ENCODE measurements at regions of chr7 and their contacts with region 1.

Region 1: DNA sequence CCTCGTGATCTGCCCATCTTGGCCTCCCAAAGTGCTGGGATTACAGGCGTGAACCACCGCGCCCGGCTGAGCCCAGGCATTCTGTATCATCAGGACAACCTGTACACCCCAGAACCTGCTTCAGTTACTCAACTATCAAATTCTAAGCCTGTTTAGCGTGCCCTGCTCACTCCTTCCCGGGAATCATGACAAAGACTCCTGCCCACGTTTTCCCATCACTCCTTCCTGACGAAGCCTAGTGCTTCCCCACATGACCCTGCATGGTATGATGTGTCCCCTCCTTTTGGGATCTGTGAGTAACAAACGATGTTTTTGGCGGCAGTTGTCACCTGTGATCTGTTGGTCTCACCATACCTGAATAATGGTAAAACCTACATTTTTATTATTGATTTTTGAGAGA is 12.2 kb upstream of the RADIL start:
- DNase-seq: no peak
- ATAC-seq: no peak

Region 2: DNA sequence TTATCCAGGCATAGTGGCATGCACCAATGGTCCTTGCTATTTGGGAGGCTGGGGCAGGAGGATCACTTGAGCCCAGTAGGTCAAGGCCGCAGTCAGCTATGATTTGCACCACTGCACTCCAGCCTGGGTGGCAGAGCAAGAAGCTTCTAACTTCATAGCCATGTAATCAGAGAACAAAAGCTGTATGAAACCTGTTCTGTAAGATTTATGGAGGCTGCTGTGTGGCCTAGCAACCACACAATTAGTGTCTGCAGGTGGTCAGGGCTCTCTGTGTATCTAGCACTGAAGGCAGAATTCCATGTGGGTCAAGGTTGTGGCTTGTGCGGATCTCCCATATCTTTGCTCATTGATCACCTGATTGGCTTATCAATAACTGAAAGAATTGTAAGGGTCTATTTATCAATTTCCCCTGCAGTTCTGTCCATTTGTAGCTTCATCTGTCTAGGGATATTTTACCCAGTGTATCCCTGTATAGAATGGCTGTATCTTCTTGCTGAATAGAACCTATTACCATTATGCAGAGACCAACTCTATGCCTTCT is 435.1 kb before region 1 on chr7:
- intact Hi-C with region 1: no loop called
- DNase-seq: no peak
- ATAC-seq: no peak

Region 3: DNA sequence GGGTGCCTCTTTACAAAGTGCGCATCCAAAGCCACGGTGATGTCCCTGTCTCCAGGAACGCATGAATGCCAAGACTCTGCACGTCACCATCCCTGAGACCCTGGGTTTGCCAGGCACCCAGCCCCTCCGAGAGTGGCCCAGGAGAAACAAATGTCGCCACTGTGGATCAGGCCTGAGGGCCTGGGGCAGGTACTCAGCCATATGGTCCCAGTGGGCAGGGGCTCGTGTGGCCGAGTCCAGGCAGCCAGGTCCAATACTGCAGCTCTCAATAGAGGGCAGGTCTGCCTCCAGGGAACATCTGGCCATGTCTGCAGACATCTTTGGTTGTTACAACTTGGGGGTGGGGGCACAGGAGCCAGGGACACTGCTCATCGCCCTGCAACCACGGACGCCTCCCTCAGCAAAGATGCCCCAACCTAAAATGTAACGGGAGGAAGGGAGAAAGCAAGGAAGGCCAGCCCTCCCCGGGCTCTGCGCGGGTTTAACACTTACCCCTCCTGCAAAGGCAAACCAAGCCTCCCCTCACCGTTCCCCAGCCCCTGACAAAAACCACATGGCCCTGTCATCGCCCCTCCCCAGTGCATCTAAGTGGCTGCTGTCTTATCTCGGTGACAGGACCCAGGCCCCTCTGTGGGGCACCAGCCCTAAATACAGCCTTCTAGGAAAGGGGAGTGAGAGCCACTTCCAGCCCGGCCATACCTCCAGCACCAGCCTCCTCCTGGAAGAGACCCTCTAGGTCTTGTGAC is 23.7 kb before region 1 on chr7:
- intact Hi-C with region 1: loop called (anchors 1 kb)
- DNase-seq: no peak
- ATAC-seq: no peak

Region 4: DNA sequence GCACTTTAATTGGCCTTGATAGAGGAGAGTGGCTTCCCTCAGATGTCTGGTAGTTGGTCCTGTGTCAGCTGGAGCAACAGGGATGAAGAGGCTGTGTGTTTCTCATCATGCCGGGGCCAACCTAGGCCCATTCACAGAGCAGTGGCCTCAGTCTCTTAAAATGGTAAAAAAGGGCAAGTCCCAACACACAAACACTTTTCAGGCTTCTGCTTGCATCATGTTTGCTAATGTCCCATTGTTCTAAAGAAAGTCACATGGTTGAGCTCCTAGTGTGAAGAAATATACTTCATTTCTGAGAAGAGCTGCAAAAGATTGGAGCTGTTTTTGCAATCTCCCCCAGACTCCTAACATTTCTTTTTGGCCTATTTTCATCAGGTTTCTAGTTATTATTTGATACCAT is 109.3 kb after region 1 on chr7:
- intact Hi-C with region 1: no loop called
- DNase-seq: no peak
- ATAC-seq: no peak